BJ (cell line): ENCODE measurements at regions of chr1 and their contacts with region 1.

Region 1: DNA sequence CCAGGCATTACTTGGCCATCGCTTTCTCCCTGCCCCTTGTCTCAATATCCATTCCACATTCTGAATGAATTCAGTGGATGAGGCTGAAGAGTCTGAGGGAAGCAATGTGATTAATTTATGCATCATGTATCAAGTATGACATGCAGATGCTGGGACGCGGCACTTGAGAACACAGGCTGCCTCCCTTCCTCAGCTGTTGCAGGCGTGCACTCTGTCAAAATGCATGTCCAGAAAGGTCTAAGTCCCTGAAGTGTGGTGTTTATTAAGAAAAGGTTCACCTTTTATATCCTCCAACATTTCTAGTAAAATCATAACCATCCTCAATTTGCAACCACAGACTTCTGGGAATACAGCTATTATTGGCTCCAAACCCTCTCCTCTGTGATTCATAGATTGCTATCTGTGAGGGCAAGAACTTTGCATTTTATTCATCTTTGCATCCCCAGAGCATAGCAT is 22.6 kb upstream of the RAB3GAP2 start:
- DNase-seq: peak; percentile 47
- H3K4me3 ChIP-seq: no peak overlapping the region
- H3K27me3 ChIP-seq: no peaks in the 10 kb centered on the region
- CTCF ChIP-seq: no peak

Region 2: GRCh38 chr1:220281159-220281574 is 13.7 kb before region 1 on chr1:
- CTCF ChIA-PET with region 1: interaction called, 26 read pairs
- POLR2A ChIA-PET with region 1: no interaction called
- DNase-seq: no peak
- H3K4me3 ChIP-seq: no peak overlapping the region
- H3K27me3 ChIP-seq: peaks cover 9% of the 10 kb centered on the region
- CTCF ChIP-seq: peak; percentile 68